ENCODE measurements at regions of chr17 and their contacts with region 1.

Region 1: GRCh38 chr17:47941236-47941994 is at the start of gene PNPO:
- DNase-seq: peak; percentile 98
- H3K4me3 Mint-ChIP-seq: peak within 1 kb of the TSS; percentile 89
- H3K27ac Mint-ChIP-seq: peak within 1 kb of the TSS; percentile 80
- H3K4me1 Mint-ChIP-seq: peaks cover 52% of the 10 kb centered on the region
- H3K27me3 Mint-ChIP-seq: no peaks in the 10 kb centered on the region
- CTCF ChIP-seq: no peak
- total RNA-seq, gene PNPO: 88.0 and 98.5 TPM in 2 replicates

Region 2: DNA sequence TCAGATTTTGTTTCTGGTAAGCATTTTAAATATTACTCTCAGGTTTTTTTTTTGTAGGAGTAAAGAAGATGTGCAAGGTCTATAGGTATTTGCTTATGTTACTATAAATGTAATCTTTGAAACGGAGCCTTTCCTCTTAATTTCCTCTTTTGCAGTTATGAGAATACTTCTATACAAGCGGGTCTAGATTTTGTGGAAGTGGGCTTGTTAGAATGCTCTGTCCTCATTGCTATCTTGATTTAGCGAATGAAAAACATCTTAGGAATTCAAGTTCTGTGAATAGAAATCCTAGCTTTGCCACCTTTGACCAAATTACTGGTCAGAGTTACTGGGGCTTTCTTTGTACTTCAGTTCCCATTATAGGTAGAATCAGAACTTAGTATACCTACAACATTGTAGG is 537.4 kb before region 1 on chr17:
- CTCF ChIA-PET with region 1: no interaction called
- intact Hi-C with region 1: no loop called
- DNase-seq: no peak
- H3K4me3 Mint-ChIP-seq: no peak overlapping the region
- H3K27ac Mint-ChIP-seq: no peak overlapping the region
- H3K4me1 Mint-ChIP-seq: peaks cover 8% of the 10 kb centered on the region
- H3K27me3 Mint-ChIP-seq: no peaks in the 10 kb centered on the region
- CTCF ChIP-seq: no peak

Region 3: GRCh38 chr17:47840740-47841603 is 100.4 kb before region 1 on chr17 and contains the start of gene SCRN2:
- CTCF ChIA-PET with region 1: interaction called, 8 read pairs
- intact Hi-C with region 1: loop called (anchors 10 kb)
- DNase-seq: peak; percentile 98
- H3K4me3 Mint-ChIP-seq: peak within 1 kb of the TSS; percentile 92
- H3K27ac Mint-ChIP-seq: peak within 1 kb of the TSS; percentile 31
- H3K4me1 Mint-ChIP-seq: peaks cover 26% of the 10 kb centered on the region
- H3K27me3 Mint-ChIP-seq: no peaks in the 10 kb centered on the region
- CTCF ChIP-seq: peak; percentile 99
- total RNA-seq, gene SCRN2: 34.8 and 37.0 TPM in 2 replicates

Region 4: DNA sequence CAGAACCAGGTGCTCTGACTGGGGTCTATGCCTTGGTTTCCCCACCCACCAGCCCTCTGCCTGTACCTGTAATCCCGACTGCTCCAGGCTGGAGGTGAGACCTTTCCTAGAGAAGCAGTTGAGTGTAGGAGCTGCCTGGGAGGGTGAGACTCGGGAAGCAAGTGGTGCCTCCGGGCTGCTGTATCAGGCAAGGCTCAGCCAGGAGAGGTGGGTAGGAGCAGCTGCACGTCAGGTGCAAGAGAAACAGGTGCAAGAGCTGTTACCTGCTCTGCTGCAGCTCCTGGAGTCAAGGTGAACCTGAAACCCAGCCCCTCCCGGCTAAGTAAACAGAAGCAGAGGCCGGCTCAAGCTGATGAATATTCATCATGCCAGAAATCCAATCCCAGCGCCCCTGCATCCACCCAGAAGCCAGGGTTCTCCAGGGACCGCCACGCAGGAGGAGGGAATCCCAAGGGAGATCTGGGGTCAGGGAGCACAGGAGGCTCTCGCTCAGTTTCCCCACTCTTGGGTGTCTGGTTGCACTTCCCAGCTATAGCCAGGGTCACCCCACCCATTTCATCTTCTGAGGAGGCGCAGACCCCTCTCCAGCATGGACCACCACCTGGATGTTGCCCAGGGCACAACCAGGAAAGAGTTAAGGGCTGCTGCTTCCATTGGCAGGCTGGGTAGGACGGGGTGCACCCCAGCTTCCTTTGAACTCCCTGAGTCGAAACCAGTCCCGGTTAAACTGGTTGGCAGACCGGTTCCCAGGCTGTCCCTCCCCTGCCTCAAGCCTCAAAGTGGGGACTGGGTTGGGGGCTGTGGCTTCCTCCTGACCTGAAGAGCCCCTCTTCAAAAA is 16.4 kb after region 1 on chr17 and contains the start of gene PRR15L:
- CTCF ChIA-PET with region 1: interaction called, 22 read pairs
- intact Hi-C with region 1: no loop called
- DNase-seq: peak; percentile 87
- H3K4me3 Mint-ChIP-seq: peak within 1 kb of the TSS; percentile 76
- H3K27ac Mint-ChIP-seq: peak within 1 kb of the TSS; percentile 69
- H3K4me1 Mint-ChIP-seq: peaks cover 82% of the 10 kb centered on the region
- H3K27me3 Mint-ChIP-seq: no peaks in the 10 kb centered on the region
- CTCF ChIP-seq: no peak
- total RNA-seq, gene PRR15L: 30.2 and 49.1 TPM in 2 replicates

Region 5: DNA sequence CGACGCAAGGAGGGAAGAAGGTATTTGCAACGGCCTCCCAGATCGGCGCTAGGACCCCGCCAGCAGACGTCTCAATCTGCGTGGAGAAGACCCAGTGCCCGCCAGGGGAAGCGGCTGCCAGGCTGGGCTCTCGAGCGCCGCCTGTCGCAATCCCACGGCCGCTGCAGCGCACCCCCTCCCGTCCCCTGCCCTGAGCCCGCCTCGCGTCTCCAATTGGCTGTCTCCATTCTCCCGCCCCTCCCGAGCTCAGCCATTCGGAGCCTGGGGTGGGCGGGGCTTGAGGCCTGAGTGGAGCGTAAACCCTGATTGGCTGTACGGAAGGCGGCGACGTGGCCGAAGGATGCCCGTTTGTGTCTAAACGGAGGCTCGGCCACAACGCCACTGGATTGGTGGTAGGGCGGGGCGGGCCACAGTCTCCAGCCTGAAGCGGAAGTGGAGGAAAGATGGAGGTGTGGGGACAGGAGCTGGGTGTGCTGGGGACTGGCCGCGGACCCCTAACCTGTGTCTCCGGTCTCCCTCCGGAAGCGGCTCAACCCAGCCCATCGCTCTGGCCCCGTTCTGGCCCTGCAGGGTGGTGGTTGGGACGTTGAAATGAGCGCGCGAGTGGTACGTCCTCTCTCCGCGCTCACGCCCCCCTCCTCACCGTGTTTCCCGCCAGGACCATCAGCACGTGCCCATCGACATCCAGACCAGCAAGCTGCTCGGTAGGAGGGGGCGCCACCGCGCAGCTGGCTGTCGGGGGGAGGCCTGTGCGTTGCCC is 29.5 kb after region 1 on chr17 and contains the start of gene CDK5RAP3:
- CTCF ChIA-PET with region 1: interaction called, 43 read pairs
- intact Hi-C with region 1: no loop called
- DNase-seq: peak; percentile 100
- H3K4me3 Mint-ChIP-seq: peak within 1 kb of the TSS; percentile 94
- H3K27ac Mint-ChIP-seq: peak within 1 kb of the TSS; percentile 19
- H3K4me1 Mint-ChIP-seq: peaks cover 32% of the 10 kb centered on the region
- H3K27me3 Mint-ChIP-seq: no peaks in the 10 kb centered on the region
- CTCF ChIP-seq: peak; percentile 100
- total RNA-seq, gene CDK5RAP3: 431 and 457 TPM in 2 replicates

Region 6: GRCh38 chr17:47999582-47999981 is 58.2 kb after region 1 on chr17:
- CTCF ChIA-PET with region 1: no interaction called
- intact Hi-C with region 1: no loop called
- DNase-seq: peak; percentile 47
- H3K4me3 Mint-ChIP-seq: no peak overlapping the region
- H3K27ac Mint-ChIP-seq: no peak overlapping the region
- H3K4me1 Mint-ChIP-seq: peaks cover 22% of the 10 kb centered on the region
- H3K27me3 Mint-ChIP-seq: no peaks in the 10 kb centered on the region
- CTCF ChIP-seq: no peak